AG04449 (cell line): ENCODE measurements at regions of chr12 and their contacts with region 1.

Region 1: DNA sequence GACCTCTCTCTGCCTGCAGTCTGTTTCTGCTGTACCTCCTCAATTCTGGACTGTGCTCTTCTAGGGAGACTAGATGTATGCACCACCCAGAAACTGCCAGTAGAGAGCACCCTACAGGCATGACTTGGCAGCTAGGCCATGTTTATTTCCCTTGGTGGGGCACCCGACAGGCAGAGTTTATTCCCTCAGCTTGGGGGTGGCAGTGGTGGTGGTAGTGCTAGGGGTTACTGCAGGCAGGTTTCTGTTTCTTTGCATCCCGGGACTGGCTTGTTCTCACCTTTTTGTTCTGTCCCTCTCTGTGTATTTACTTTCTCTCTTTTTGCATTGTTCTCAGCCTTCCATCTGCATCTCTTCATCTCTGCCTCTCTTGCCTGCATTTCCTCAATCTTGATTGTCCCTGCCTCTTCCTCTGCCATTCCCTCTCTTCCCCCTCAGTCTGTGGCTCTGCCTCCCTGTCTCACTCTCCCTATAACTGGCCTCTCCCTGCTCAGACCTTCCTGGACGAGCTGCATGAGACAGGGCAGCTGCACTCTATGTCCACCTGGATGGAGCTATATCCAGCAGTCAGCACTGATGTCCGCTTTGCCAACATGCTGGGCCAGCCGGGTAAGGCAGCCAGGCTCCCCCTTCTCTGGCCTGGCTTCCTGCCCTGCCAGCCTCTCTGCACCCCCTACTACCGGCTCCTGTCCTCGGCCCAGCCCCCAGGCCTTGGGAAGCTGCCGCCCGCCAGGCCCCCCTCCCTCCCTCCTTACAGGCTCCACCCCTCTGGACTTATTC is 13.8 kb downstream of the PRPF40B start:
- DNase-seq: no peak
- H3K4me3 ChIP-seq: no peak overlapping the region
- CTCF ChIP-seq: peak; percentile 80

Region 2: DNA sequence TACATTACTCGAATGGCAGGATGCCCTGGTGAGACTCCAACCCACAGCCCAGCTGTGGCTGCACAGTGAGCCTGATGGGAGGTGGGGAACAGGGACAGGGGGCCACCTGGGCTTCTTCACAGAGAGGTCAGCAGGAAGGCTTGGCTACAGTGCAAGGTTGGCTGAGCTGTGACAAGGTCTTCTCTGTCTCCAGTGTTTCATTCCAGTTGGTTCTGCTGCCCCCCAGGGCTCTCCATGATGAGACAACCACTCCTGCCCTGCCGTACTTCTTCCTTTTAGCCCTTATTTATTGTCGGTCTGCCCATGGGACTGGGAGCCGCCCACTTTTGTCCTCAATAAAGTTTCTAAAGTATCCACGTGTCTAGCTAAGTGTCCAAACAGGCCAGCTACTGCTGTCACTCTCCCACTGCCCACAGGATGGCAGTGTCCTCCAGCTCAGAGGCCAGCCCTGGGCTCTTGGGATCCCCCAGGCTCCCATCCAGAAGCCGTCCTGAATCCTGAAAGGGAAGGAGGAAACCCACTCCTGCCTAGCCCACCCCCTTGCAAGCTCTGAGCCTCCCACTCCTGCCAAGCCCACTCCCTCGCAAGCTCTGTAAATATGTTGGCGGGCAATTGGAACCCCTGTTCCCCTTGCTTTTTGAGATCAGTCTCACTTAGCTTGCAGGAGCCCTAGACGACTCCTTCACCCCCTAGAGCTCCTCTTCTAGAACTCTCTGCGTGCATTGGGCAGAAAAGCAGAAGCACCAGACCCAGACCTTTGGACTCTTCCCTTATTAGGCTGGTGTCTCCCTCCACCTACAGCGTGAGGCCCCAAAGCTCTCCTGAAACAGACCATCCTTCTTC is 305.6 kb before region 1 on chr12:
- CTCF ChIA-PET with region 1: interaction called, 10 read pairs
- POLR2A ChIA-PET with region 1: no interaction called
- DNase-seq: no peak
- H3K4me3 ChIP-seq: no peak overlapping the region
- CTCF ChIP-seq: peak; percentile 84

Region 3: DNA sequence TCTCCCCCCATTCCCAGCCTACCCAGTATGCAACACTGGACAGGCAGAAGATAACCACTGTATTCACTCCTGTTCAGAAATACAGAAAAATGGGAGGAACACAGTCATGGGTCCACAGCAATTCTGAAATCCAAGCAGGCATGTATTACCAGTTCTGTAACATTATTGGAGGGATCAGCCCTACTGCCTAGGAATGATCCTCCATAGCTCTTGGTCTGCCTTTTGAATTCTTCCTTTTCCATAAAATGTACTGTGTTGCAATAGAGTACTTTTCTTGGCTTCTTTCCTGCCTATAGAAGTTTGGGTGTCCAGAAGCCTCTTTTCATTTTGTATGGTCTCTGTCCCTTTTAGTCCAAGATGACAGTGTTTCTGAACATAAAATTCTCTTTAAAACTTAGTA is 223.4 kb before region 1 on chr12:
- CTCF ChIA-PET with region 1: no interaction called
- POLR2A ChIA-PET with region 1: no interaction called
- DNase-seq: peak; percentile 14
- H3K4me3 ChIP-seq: no peak overlapping the region
- CTCF ChIP-seq: no peak

Region 4: GRCh38 chr12:49662998-49663843 is 26.1 kb after region 1 on chr12:
- CTCF ChIA-PET with region 1: interaction called, 300 read pairs
- POLR2A ChIA-PET with region 1: interaction called, 3 read pairs
- DNase-seq: no peak
- H3K4me3 ChIP-seq: no peak overlapping the region
- CTCF ChIP-seq: no peak

Region 5: GRCh38 chr12:49707128-49707811 is 70.1 kb after region 1 on chr12 and contains the start of gene FMNL3:
- CTCF ChIA-PET with region 1: interaction called, 766 read pairs
- POLR2A ChIA-PET with region 1: no interaction called
- DNase-seq: peak; percentile 59
- H3K4me3 ChIP-seq: peak within 1 kb of the TSS; percentile 70
- CTCF ChIP-seq: peak; percentile 90

Region 6: DNA sequence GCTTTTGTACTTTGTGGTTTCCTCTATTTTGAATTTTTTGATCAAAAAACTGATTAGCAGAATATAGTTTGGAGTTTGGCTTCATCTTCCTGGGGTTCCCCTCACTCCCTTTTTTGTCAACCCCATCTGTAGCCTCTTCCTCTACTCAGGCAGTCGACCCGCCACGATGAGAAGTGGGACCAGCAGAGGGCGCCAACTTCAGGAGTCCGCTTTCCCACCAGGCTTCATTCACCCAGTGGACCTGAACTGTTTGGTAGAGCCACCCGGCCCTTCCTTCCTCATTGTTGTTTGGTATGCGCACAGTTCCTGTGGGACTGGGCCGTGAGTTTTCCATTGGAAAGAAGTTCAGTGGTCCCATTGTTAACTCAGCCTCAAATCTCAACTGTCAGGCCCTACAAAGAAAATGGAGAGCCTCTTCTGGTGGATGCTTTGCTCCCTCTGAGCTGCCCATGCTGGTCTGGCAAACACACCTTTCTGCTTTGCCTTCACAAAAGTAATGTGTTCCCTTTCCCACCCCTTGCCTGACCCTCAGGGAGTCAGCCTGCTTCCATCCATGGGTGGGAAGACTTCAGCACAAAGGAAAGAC is 125.9 kb after region 1 on chr12:
- CTCF ChIA-PET with region 1: interaction called, 46 read pairs
- POLR2A ChIA-PET with region 1: no interaction called
- DNase-seq: no peak
- H3K4me3 ChIP-seq: no peak overlapping the region
- CTCF ChIP-seq: peak; percentile 82